ENCODE measurements at regions of chr17 and their contacts with region 1.

Region 1: GRCh38 chr17:45371414-45372327 is 54.9 kb upstream of the MAP3K14 start:
- DNase-seq: peak; percentile 89
- ATAC-seq: peak; percentile 97
- H3K4me3 ChIP-seq: peak overlapping the region; percentile 66 to 76 (median 67)
- H3K27ac ChIP-seq: peak overlapping the region; percentile 66
- H3K4me1 ChIP-seq: peaks cover 47% of the 10 kb centered on the region
- H3K27me3 ChIP-seq: peaks cover 0 to 3% of the 10 kb centered on the region in 2 experiments; a peak in 1 of 5 replicates
- CTCF ChIP-seq: peak; percentile 48
- EP300 ChIP-seq: peak in 1 of 2 experiments; percentile 18; a peak in 2 of 4 replicates
- POLR2A ChIP-seq: peak in 1 of 2 experiments; percentile 87; a peak in 2 of 4 replicates
- RAD21 ChIP-seq: peak; percentile 65

Region 2: GRCh38 chr17:45311760-45312476 is 59.8 kb before region 1 on chr17:
- CTCF ChIA-PET with region 1: no interaction called
- POLR2A ChIA-PET with region 1: interaction called, 28 read pairs
- in situ Hi-C with region 1: no loop called
- intact Hi-C with region 1: loop called (anchors 5 kb)
- DNase-seq: peak; percentile 96
- ATAC-seq: peak; percentile 81
- H3K4me3 ChIP-seq: peak overlapping the region; percentile 21 to 64 (median 29); a peak in 5 of 6 replicates
- H3K27ac ChIP-seq: peak overlapping the region; percentile 78
- H3K4me1 ChIP-seq: peaks cover 73% of the 10 kb centered on the region
- H3K27me3 ChIP-seq: no peaks in the 10 kb centered on the region
- CTCF ChIP-seq: peak; percentile 22; the same call in 1 of the 2 replicates
- EP300 ChIP-seq: peak in 1 of 2 experiments; percentile 63; a peak in 1 of 4 replicates
- POLR2A ChIP-seq: no peak
- RAD21 ChIP-seq: peak; percentile 53

Region 3: GRCh38 chr17:45317112-45317928 is 54.4 kb before region 1 on chr17:
- CTCF ChIA-PET with region 1: no interaction called
- POLR2A ChIA-PET with region 1: interaction called, 28 read pairs
- in situ Hi-C with region 1: no loop called
- intact Hi-C with region 1: loop called (anchors 5 kb)
- DNase-seq: peak; percentile 100
- ATAC-seq: peak; percentile 88
- H3K4me3 ChIP-seq: peak overlapping the region; percentile 43 to 86 (median 67)
- H3K27ac ChIP-seq: peak overlapping the region; percentile 47
- H3K4me1 ChIP-seq: peaks cover 59% of the 10 kb centered on the region
- H3K27me3 ChIP-seq: peaks cover 2 to 36% of the 10 kb centered on the region in 2 experiments; a peak in 3 of 5 replicates
- CTCF ChIP-seq: peak; percentile 37
- EP300 ChIP-seq: no peak; a peak in 1 of 4 replicates
- POLR2A ChIP-seq: peak in 1 of 2 experiments; percentile 24; a peak in 1 of 4 replicates
- RAD21 ChIP-seq: 0 out of 2 replicates have a peak, but pooled peaks have one; percentile 28

Region 4: GRCh38 chr17:45332989-45333701 is 38.5 kb before region 1 on chr17:
- CTCF ChIA-PET with region 1: no interaction called
- POLR2A ChIA-PET with region 1: no interaction called
- in situ Hi-C with region 1: no loop called
- intact Hi-C with region 1: no loop called
- DNase-seq: no peak
- ATAC-seq: no peak
- H3K4me3 ChIP-seq: no peak overlapping the region
- H3K27ac ChIP-seq: no peak overlapping the region
- H3K4me1 ChIP-seq: peaks cover 7% of the 10 kb centered on the region; the same call in 1 of the 2 replicates
- H3K27me3 ChIP-seq: peaks cover 0 to 20% of the 10 kb centered on the region in 2 experiments; a peak in 3 of 5 replicates
- CTCF ChIP-seq: no peak
- EP300 ChIP-seq: no peak
- POLR2A ChIP-seq: no peak
- RAD21 ChIP-seq: no peak

Measured in HepG2 (cell line).